Gastrocnemius medialis (tissue), 4 donors: ENCODE measurements at regions of chr14 and their contacts with region 1.

Region 1: GRCh38 chr14:54509546-54510501 is at the start of gene CGRRF1:
- DNase-seq: peak; percentile 97 to 98
- ATAC-seq: peak; percentile 97 to 100
- H3K4me3 ChIP-seq: peak within 1 kb of the TSS; percentile 96 to 100 (median 99)
- H3K27ac ChIP-seq: peak within 1 kb of the TSS; percentile 91 to 93 (median 92)
- H3K4me1 ChIP-seq: peaks cover 30 to 33% of the 10 kb centered on the region in 2 donors
- H3K27me3 ChIP-seq: no peaks in the 10 kb centered on the region
- CTCF ChIP-seq: peak; percentile 24 to 90 (median 88)
- POLR2A ChIP-seq: peak; percentile 66 to 74
- total RNA-seq, gene CGRRF1: 13.7 to 27.0 (median 20.7) TPM

Region 2: DNA sequence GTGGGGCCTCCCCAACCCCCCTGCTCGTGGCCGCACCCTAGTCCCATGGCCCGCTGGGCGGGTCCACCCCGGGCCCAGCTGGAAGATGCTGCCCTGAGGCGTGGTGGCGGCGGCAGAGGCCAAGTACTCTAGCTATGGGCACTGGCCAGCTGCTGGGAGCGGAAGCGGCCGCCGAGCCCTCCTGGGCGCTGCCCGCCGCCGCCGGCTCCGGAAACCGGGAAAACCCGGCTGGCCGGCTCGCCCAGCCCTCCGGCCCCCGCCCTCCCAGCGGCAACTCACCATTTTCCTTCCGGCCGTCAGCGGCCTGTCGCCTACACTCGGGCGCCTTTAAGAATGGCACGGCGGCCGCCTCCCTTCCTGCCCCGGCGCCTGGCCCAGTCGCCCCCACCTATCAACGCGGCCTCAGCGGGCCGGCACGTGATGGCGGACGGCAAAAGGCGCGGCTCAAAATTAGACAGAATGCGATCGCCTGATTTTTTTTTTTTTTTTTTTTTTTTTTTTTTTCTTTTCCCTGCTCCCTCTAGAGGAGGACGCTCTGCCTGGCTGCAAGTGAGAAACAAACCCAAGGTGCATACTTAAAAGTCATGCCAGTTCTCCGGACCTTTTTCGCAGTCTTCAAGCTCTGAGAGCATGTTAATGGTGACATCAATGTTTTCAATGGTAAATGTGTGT is 21.0 kb before region 1 on chr14 and contains the start of gene GMFB:
- in situ Hi-C with region 1: no loop called
- intact Hi-C with region 1: loop called (anchors 1 kb)
- DNase-seq: peak; percentile 84 to 90
- ATAC-seq: peak; percentile 97
- H3K4me3 ChIP-seq: peak within 1 kb of the TSS; percentile 71 to 97 (median 94)
- H3K27ac ChIP-seq: peak within 1 kb of the TSS; percentile 90 to 98 (median 92)
- H3K4me1 ChIP-seq: peaks cover 20 to 31% of the 10 kb centered on the region in 2 donors
- H3K27me3 ChIP-seq: no peaks in the 10 kb centered on the region
- CTCF ChIP-seq: peak in 3 of 5 experiments; percentile 44 to 61 (median 55)
- POLR2A ChIP-seq: peak; percentile 66 to 70
- total RNA-seq, gene GMFB: 5.0 to 21.7 (median 7.3) TPM